Caco-2 (cell line): ENCODE measurements at regions of chr3 and their contacts with region 1.

Region 1: GRCh38 chr3:52154117-52155094 is at the start of gene POC1A:
- DNase-seq: peak; percentile 92 to 95
- H3K4me3 ChIP-seq: peak within 1 kb of the TSS; percentile 88
- H3K4me3 Mint-ChIP-seq: peak within 1 kb of the TSS; percentile 95
- H3K27ac Mint-ChIP-seq: peak within 1 kb of the TSS; percentile 98
- H3K4me1 ChIP-seq: peaks cover 11% of the 10 kb centered on the region
- H3K4me1 Mint-ChIP-seq: no peaks in the 10 kb centered on the region
- H3K27me3 ChIP-seq: no peaks in the 10 kb centered on the region
- H3K27me3 Mint-ChIP-seq: no peaks in the 10 kb centered on the region
- CTCF ChIP-seq: no peak
- total RNA-seq, gene POC1A: 28.3 and 32.2 TPM in 2 replicates

Region 2: DNA sequence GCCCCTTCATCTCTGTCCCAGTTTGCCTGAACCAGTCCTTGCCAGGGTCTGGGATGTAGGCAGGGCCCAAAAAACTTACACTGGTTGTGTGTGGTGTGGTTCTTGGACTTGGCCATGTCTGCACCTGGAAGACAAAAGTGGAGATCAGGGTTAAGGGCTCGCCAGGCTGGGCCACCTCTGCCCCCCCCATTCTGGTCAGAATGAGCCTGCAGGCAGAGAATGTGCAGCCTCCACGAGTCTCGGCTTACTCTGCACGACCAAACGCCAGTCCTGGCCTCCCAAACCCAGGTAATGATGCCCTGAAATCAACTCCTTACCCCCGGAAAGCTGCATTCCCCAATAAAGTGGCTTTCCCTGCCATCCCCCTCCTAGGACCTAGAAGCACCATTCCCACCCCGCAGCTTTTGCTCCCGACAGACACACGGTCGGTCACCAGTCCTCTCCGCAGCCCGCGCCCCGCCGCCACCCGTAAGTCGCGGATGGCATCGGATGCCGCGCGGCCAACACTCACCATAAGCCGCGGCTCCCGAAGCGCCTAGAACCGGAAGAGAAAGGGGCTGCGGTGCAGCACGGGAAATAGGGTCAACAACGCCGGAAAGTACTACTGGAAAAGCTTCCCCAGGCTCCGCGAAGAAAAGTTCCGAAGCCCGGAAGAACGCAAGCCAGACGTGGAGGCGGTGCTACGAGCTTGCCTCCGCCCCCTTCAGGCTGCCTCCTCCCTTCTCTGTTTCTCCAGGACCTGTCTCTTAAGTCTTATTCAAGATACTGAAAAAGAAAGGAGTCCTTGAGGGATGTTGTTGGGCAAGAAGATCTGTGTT is 158.9 kb before region 1 on chr3 and contains the start of gene RPL29:
- CTCF ChIA-PET with region 1: no interaction called
- POLR2A ChIA-PET with region 1: interaction called, 14 read pairs
- intact Hi-C with region 1: no loop called
- DNase-seq: peak; percentile 93
- H3K4me3 ChIP-seq: peak within 1 kb of the TSS; percentile 60
- H3K4me3 Mint-ChIP-seq: peak within 1 kb of the TSS; percentile 93
- H3K27ac Mint-ChIP-seq: peak within 1 kb of the TSS; percentile 99
- H3K4me1 ChIP-seq: peaks cover 18% of the 10 kb centered on the region
- H3K4me1 Mint-ChIP-seq: peaks cover 9% of the 10 kb centered on the region
- H3K27me3 ChIP-seq: no peaks in the 10 kb centered on the region
- H3K27me3 Mint-ChIP-seq: no peaks in the 10 kb centered on the region
- CTCF ChIP-seq: no peak
- total RNA-seq, gene RPL29: 976 and 995 TPM in 2 replicates

Region 3: DNA sequence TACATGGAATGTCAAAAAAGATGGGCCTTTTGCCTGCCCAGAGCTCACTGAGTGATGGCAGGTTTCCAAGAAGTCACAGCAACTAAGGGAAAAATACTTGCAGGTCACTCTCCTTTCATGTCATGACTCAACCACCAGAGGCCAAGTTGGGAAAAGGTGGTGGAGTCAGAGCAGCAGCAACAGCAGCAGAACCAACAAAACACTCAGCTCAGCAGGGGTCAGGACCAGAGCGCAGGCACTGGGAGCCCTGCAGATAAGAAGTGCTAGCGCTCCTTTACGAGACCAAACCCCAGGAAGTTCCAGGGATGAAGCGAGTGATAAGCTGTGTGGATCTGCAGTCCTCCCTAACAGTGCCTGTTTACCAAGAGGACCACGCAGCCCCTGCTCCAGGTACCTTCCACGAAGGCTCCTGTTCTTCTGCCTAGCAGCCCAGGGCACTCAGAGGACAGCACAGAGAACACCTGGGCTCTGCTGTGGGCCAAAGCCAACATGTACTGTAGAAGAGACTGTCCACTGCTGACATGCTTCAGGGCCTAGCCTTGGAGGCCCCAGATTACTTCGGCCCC is 26.2 kb before region 1 on chr3:
- CTCF ChIA-PET with region 1: no interaction called
- POLR2A ChIA-PET with region 1: no interaction called
- intact Hi-C with region 1: no loop called
- DNase-seq: peak; percentile 36 to 50
- H3K4me3 ChIP-seq: no peak overlapping the region
- H3K4me3 Mint-ChIP-seq: no peak overlapping the region
- H3K27ac Mint-ChIP-seq: no peak overlapping the region
- H3K4me1 ChIP-seq: no peaks in the 10 kb centered on the region
- H3K4me1 Mint-ChIP-seq: no peaks in the 10 kb centered on the region
- H3K27me3 ChIP-seq: no peaks in the 10 kb centered on the region
- H3K27me3 Mint-ChIP-seq: no peaks in the 10 kb centered on the region
- CTCF ChIP-seq: no peak

Region 4: DNA sequence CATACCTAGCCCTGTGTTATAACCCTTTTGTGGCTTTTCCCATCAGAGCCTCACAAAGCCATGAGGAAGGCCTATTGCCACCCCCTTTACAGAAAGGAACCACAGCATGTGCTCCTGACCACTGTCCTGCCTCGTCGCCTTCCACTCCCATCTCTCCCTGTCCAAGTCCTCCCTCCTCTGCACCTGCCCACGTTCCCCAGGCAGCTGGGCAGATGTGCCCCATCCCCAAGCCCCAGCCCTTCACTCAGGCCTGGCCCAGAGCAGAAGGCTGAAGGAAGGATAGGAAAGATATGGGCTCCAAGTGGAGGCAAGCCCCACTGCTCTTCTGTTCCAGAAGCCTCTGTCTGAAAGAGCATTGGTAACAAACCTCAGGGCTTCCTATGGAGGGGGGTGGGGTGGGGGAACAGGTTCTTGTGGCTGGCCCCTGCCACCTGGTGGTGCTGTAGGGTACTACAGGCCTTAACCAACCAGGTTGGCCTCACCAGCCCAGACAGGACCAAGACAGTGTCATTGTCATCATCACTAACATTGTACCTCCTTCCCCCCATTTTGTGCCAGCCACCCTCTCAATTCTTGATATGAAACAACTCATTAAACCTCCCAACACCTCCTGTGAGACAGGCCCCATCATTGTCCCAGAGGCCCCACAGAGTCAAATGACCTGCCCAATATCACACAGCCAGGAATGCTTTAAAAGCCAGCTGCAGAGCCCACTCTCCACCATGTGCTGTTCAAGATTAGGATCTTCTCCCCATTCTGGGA is 10.2 kb before region 1 on chr3:
- CTCF ChIA-PET with region 1: interaction called, 12 read pairs
- POLR2A ChIA-PET with region 1: no interaction called
- intact Hi-C with region 1: no loop called
- DNase-seq: peak; percentile 82 to 84
- H3K4me3 ChIP-seq: no peak overlapping the region
- H3K4me3 Mint-ChIP-seq: no peak overlapping the region
- H3K27ac Mint-ChIP-seq: no peak overlapping the region
- H3K4me1 ChIP-seq: no peaks in the 10 kb centered on the region
- H3K4me1 Mint-ChIP-seq: no peaks in the 10 kb centered on the region
- H3K27me3 ChIP-seq: no peaks in the 10 kb centered on the region
- H3K27me3 Mint-ChIP-seq: no peaks in the 10 kb centered on the region
- CTCF ChIP-seq: peak; percentile 91 to 97

Region 5: DNA sequence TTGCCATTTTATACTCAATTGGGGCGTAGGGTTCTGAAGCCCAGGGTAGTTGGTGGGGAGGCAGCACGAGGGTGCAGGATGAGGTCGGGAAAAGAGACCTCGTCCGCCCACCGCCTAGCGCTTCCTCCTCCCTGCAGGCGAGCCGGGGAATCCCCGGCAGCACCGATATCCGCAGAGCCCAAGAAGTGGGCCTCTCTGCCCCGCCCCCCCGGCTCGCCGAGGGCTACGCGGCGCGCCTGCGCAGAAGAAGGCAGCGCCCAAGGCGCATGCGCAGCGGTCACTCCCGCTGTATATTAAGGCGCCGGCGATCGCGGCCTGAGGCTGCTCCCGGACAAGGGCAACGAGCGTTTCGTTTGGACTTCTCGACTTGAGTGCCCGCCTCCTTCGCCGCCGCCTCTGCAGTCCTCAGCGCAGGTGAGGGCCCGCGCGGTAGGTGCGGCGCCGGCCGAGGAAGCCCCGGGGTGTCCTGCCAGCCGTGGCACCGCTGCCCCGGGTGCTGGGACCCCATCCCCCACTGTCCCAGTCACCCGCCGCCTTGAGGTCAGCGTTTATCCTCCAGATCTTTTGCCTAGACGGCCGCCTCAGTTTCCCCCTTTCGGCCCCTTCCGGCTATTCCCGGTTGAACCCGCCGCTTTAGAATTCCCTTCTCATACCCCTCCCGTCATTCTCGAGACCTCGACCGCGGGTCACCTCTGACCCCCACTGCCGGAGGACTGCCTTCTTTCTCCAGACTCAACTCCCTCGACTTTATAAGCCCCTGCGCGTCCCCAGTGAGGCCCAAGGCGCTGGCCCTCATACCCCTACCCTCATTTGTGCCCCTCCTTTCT is 43.6 kb after region 1 on chr3 and contains the start of gene ALAS1:
- CTCF ChIA-PET with region 1: no interaction called
- POLR2A ChIA-PET with region 1: interaction called, 5 read pairs
- intact Hi-C with region 1: loop called (anchors 5 kb)
- DNase-seq: peak; percentile 90 to 97
- H3K4me3 ChIP-seq: peak within 1 kb of the TSS; percentile 95
- H3K4me3 Mint-ChIP-seq: peak within 1 kb of the TSS; percentile 98
- H3K27ac Mint-ChIP-seq: peak within 1 kb of the TSS; percentile 90
- H3K4me1 ChIP-seq: peaks cover 30% of the 10 kb centered on the region
- H3K4me1 Mint-ChIP-seq: peaks cover 7% of the 10 kb centered on the region
- H3K27me3 ChIP-seq: no peaks in the 10 kb centered on the region
- H3K27me3 Mint-ChIP-seq: no peaks in the 10 kb centered on the region
- CTCF ChIP-seq: peak in 1 of 2 experiments; percentile 21
- total RNA-seq, gene ALAS1: 53.1 and 60.0 TPM in 2 replicates

Region 6: GRCh38 chr3:52471371-52472238 is 317.2 kb after region 1 on chr3:
- CTCF ChIA-PET with region 1: no interaction called
- POLR2A ChIA-PET with region 1: no interaction called
- intact Hi-C with region 1: no loop called
- DNase-seq: peak in 1 of 2 experiments; percentile 38
- H3K4me3 ChIP-seq: no peak overlapping the region
- H3K4me3 Mint-ChIP-seq: no peak overlapping the region
- H3K27ac Mint-ChIP-seq: no peak overlapping the region
- H3K4me1 ChIP-seq: no peaks in the 10 kb centered on the region
- H3K4me1 Mint-ChIP-seq: no peaks in the 10 kb centered on the region
- H3K27me3 ChIP-seq: no peaks in the 10 kb centered on the region
- H3K27me3 Mint-ChIP-seq: no peaks in the 10 kb centered on the region
- CTCF ChIP-seq: peak; percentile 27 to 50